ENCODE measurements at regions of chr1 and their contacts with region 1.

Region 1: GRCh38 chr1:214261206-214262123 is 19.5 kb upstream of the SMYD2 start:
- DNase-seq: peak; percentile 60 to 89 (median 78)
- ATAC-seq: peak; percentile 95
- H3K4me3 ChIP-seq: no peak overlapping the region
- H3K4me3 Mint-ChIP-seq: no peak overlapping the region
- H3K27ac ChIP-seq: no peak overlapping the region
- H3K27ac Mint-ChIP-seq: no peak overlapping the region
- H3K4me1 ChIP-seq: peaks cover 5% of the 10 kb centered on the region
- H3K4me1 Mint-ChIP-seq: no peaks in the 10 kb centered on the region
- H3K27me3 ChIP-seq: peaks cover 6 to 32% of the 10 kb centered on the region in 2 experiments
- H3K27me3 Mint-ChIP-seq: peaks cover 85% of the 10 kb centered on the region
- CTCF ChIP-seq: peak; percentile 91

Region 2: GRCh38 chr1:214213136-214213535 is 48.3 kb before region 1 on chr1:
- CTCF ChIA-PET with region 1: no interaction called
- POLR2A ChIA-PET with region 1: no interaction called
- intact Hi-C with region 1: loop called in 1 of 2 experiments (anchors 5 kb)
- DNase-seq: no peak
- ATAC-seq: no peak
- H3K4me3 ChIP-seq: no peak overlapping the region
- H3K4me3 Mint-ChIP-seq: no peak overlapping the region
- H3K27ac ChIP-seq: no peak overlapping the region
- H3K27ac Mint-ChIP-seq: no peak overlapping the region
- H3K4me1 ChIP-seq: peaks cover 3% of the 10 kb centered on the region
- H3K4me1 Mint-ChIP-seq: peaks cover 5% of the 10 kb centered on the region
- H3K27me3 ChIP-seq: peaks cover 4 to 6% of the 10 kb centered on the region in 2 experiments
- H3K27me3 Mint-ChIP-seq: peaks cover 30% of the 10 kb centered on the region
- CTCF ChIP-seq: no peak

Region 3: DNA sequence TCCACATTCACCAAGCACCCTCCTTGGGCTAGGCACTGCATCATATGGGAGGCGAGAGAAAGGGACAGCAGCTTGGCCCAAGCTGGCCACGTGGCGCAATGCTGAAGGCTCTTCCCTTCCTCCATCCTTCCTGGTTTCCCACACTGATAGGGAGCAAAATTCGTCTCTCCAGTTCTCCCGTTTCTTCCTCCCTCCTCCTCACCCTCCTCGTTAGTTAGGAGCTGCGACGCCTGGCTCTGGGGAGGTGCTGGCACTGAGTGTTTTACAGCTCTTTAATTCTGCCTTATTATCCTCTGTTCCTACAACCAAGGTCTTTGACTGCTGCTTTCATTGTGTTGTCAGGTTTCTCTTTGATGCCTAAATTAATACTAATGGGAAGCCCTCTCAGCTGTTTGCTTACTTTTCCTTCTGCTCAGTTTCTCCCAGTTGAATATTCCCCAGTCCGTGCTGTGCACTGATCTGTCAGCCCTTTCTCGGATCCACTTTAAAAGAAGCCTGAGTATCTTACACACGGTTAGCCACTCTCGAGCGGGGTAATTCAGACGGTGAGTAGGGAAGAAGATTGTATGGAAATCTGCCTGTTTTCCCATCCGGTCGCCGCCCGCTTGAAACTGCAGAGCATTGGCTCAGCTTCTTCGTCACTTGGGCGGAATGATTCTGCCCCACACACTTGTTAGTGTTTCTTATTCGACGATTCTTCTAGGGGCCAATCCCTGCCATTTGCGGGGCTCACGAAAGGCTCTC is 36.7 kb before region 1 on chr1:
- CTCF ChIA-PET with region 1: no interaction called
- POLR2A ChIA-PET with region 1: no interaction called
- intact Hi-C with region 1: no loop called
- DNase-seq: no peak
- ATAC-seq: no peak
- H3K4me3 ChIP-seq: no peak overlapping the region
- H3K4me3 Mint-ChIP-seq: no peak overlapping the region
- H3K27ac ChIP-seq: no peak overlapping the region
- H3K27ac Mint-ChIP-seq: no peak overlapping the region
- H3K4me1 ChIP-seq: no peaks in the 10 kb centered on the region
- H3K4me1 Mint-ChIP-seq: no peaks in the 10 kb centered on the region
- H3K27me3 ChIP-seq: no peaks in the 10 kb centered on the region
- H3K27me3 Mint-ChIP-seq: peaks cover 44% of the 10 kb centered on the region
- CTCF ChIP-seq: no peak

Region 4: DNA sequence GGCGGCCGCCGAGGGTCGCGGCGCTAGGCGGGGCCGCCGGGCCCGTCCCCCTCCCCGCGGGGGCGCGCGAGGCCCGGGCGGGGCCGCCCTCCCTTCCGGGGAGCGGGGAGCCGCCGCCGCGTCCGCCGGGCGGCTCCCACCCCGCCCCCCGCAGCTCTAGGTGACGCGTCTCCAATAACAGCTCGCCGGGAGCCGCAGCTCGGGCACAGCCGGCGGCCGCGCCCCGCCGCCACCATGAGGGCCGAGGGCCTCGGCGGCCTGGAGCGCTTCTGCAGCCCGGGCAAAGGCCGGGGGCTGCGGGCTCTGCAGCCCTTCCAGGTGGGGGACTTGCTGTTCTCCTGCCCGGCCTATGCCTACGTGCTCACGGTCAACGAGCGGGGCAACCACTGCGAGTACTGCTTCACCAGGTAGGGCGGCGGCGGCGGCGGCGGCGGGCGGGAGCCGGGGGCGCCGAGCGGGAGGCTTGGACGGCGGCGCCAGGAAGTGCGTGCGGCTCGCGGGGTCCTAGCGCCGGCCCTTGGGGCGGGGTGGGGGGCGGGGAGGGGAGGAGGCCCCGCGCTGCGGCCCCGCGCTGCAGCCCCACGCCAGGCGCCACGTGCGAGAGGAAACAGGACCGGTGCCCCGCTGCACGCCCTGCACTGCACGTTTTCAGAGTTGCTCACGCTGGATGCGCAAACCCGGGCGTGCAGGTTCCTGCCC is 19.7 kb after region 1 on chr1 and contains the start of gene SMYD2:
- CTCF ChIA-PET with region 1: interaction called, 6 read pairs
- POLR2A ChIA-PET with region 1: interaction called, 3 read pairs
- intact Hi-C with region 1: loop called (anchors 1 kb)
- DNase-seq: peak; percentile 48 to 87 (median 68)
- ATAC-seq: peak; percentile 78
- H3K4me3 ChIP-seq: peak within 1 kb of the TSS; percentile 89
- H3K4me3 Mint-ChIP-seq: peak within 1 kb of the TSS; percentile 93
- H3K27ac ChIP-seq: peak within 1 kb of the TSS; percentile 37 to 65
- H3K27ac Mint-ChIP-seq: peak within 1 kb of the TSS; percentile 84
- H3K4me1 ChIP-seq: peaks cover 21% of the 10 kb centered on the region
- H3K4me1 Mint-ChIP-seq: peaks cover 50% of the 10 kb centered on the region
- H3K27me3 ChIP-seq: no peaks in the 10 kb centered on the region
- H3K27me3 Mint-ChIP-seq: no peaks in the 10 kb centered on the region
- CTCF ChIP-seq: no peak
- total RNA-seq, gene SMYD2: 17.1 to 17.6 TPM

Region 5: GRCh38 chr1:214584805-214585766 is 323.6 kb after region 1 on chr1:
- CTCF ChIA-PET with region 1: no interaction called
- POLR2A ChIA-PET with region 1: no interaction called
- intact Hi-C with region 1: loop called in 1 of 2 experiments (anchors 2 kb)
- DNase-seq: peak in 2 of 14 experiments; percentile 2 to 5
- ATAC-seq: peak; percentile 49
- H3K4me3 ChIP-seq: no peak overlapping the region
- H3K4me3 Mint-ChIP-seq: no peak overlapping the region
- H3K27ac ChIP-seq: no peak overlapping the region
- H3K27ac Mint-ChIP-seq: no peak overlapping the region
- H3K4me1 ChIP-seq: no peaks in the 10 kb centered on the region
- H3K4me1 Mint-ChIP-seq: no peaks in the 10 kb centered on the region
- H3K27me3 ChIP-seq: peaks cover 0 to 2% of the 10 kb centered on the region in 2 experiments
- H3K27me3 Mint-ChIP-seq: peaks cover 4% of the 10 kb centered on the region
- CTCF ChIP-seq: peak; percentile 57

Region 6: GRCh38 chr1:215526553-215527151 is 1265.2 kb after region 1 on chr1:
- CTCF ChIA-PET with region 1: no interaction called
- POLR2A ChIA-PET with region 1: no interaction called
- intact Hi-C with region 1: loop called (anchors 5 kb)
- DNase-seq: peak in 3 of 14 experiments; percentile 44 to 66 (median 63)
- ATAC-seq: peak; percentile 41
- H3K4me3 ChIP-seq: no peak overlapping the region
- H3K4me3 Mint-ChIP-seq: no peak overlapping the region
- H3K27ac ChIP-seq: no peak overlapping the region
- H3K27ac Mint-ChIP-seq: no peak overlapping the region
- H3K4me1 ChIP-seq: no peaks in the 10 kb centered on the region
- H3K4me1 Mint-ChIP-seq: peaks cover 5% of the 10 kb centered on the region
- H3K27me3 ChIP-seq: peaks cover 0 to 7% of the 10 kb centered on the region in 2 experiments
- H3K27me3 Mint-ChIP-seq: peaks cover 29% of the 10 kb centered on the region
- CTCF ChIP-seq: peak; percentile 74

Measured in CD4-positive, alpha-beta T cell (primary cell).